ENCODE measurements at regions of chr16 and their contacts with region 1.

Region 1: GRCh38 chr16:25289466-25289865 is 31.8 kb upstream of the ZKSCAN2 start:
- DNase-seq: no peak
- H3K4me3 ChIP-seq: no peak overlapping the region
- H3K4me3 Mint-ChIP-seq: no peak overlapping the region
- H3K27ac ChIP-seq: no peak overlapping the region
- H3K27ac Mint-ChIP-seq: no peak overlapping the region
- H3K4me1 ChIP-seq: no peaks in the 10 kb centered on the region
- H3K4me1 Mint-ChIP-seq: no peaks in the 10 kb centered on the region
- H3K27me3 ChIP-seq: no peaks in the 10 kb centered on the region
- H3K27me3 Mint-ChIP-seq: peaks cover 2 to 7% (median 3%) of the 10 kb centered on the region in 3 donors
- CTCF ChIP-seq: no peak

Region 2: DNA sequence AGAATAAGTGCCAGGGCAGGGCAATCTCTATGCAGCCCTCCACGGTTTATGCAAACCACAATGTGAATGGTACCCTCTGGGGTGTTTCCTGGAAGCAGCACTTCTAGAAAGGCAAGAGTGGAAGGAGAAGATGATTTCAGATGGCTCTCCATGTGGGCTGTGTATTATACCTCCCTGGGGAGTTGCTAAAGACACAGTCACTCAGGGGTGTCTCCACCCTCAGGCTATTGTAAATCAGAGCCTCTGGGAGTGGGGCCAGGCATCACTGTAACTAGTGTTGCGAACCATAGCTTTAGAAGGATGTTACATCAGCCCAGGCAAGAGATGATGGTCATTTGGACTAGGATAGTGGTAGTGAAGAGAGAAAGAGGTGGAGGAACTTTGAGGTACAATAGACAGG is 51.5 kb after region 1 on chr16:
- intact Hi-C with region 1: loop called in 1 of 2 experiments (anchors 10 kb)
- DNase-seq: no peak
- H3K4me3 ChIP-seq: no peak overlapping the region
- H3K4me3 Mint-ChIP-seq: no peak overlapping the region
- H3K27ac ChIP-seq: no peak overlapping the region
- H3K27ac Mint-ChIP-seq: no peak overlapping the region
- H3K4me1 ChIP-seq: no peaks in the 10 kb centered on the region
- H3K4me1 Mint-ChIP-seq: no peaks in the 10 kb centered on the region
- H3K27me3 ChIP-seq: no peaks in the 10 kb centered on the region
- H3K27me3 Mint-ChIP-seq: peaks cover 0 to 1% (median under 1%) of the 10 kb centered on the region in 3 donors
- CTCF ChIP-seq: no peak